Heart right ventricle (tissue), 16 donors: ENCODE measurements at regions of chr17 and their contacts with region 1.

Region 1: GRCh38 chr17:48351831-48352332 is 78.1 kb downstream of the SKAP1 start:
- DNase-seq: no peak
- ATAC-seq: no peak
- H3K4me3 ChIP-seq: no peak overlapping the region
- H3K27ac ChIP-seq: no peak overlapping the region
- H3K4me1 ChIP-seq: no peaks in the 10 kb centered on the region
- H3K27me3 ChIP-seq: peaks cover 0 to 93% (median 74%) of the 10 kb centered on the region in 7 donors
- CTCF ChIP-seq: peak; percentile 33 to 76 (median 63)

Region 2: GRCh38 chr17:48276776-48277175 is 75.1 kb before region 1 on chr17:
- intact Hi-C with region 1: no loop called
- DNase-seq: no peak
- ATAC-seq: no peak
- H3K4me3 ChIP-seq: no peak overlapping the region
- H3K27ac ChIP-seq: no peak overlapping the region
- H3K4me1 ChIP-seq: no peaks in the 10 kb centered on the region
- H3K27me3 ChIP-seq: peaks cover 0 to 9% (median 0%) of the 10 kb centered on the region in 7 donors
- CTCF ChIP-seq: no peak

Region 3: DNA sequence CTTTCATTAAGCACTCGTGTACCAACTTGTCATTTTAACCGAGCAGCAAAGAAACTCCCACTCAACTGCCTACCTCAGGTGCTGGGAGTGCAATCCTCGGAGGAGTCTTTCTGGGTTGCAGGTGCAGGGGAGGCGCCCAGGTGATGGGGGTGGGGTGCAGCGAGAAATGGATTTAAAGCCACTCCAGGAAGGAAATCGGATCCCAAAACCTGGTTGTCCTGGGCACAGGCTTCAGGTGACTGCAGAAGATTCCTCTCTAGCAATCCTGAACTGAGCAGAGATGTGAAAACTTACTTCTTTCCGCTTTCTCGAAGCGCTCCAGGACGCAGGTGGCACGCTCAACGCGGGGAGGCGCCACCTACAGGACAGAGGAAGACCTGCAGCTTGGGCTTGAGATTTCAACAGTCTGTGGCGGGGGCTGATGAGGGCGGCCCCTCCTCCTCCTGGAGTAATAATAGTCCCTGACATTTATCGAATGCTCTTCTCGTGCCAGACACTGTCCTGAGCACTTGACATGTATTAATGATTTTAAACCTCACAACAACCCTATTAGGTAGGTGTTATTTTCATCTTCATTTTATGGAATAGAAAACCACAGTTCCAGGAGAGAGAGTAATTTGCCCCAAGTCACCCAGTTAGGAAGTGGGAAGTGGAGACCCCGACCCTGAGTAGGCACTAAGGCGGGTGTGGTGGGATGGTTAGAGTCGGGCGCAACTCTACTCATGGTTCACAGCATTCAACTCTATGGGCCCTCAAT is 105.4 kb after region 1 on chr17:
- intact Hi-C with region 1: loop called in 1 of 10 experiments (anchors 5 kb)
- DNase-seq: peak; percentile 37 to 41
- ATAC-seq: peak; percentile 34 to 88 (median 73)
- H3K4me3 ChIP-seq: no peak overlapping the region
- H3K27ac ChIP-seq: no peak overlapping the region
- H3K4me1 ChIP-seq: peaks cover 0 to 9% (median 0%) of the 10 kb centered on the region in 9 donors
- H3K27me3 ChIP-seq: peaks cover 0 to 92% (median 71%) of the 10 kb centered on the region in 7 donors
- CTCF ChIP-seq: peak; percentile 71 to 95 (median 92)